ENCODE measurements at regions of chr17 and their contacts with region 1.

Region 1: GRCh38 chr17:1716076-1716995 is 6.2 kb upstream of the TLCD2 start:
- DNase-seq: peak; percentile 100
- H3K4me3 Mint-ChIP-seq: peak overlapping the region; percentile 90
- H3K27ac Mint-ChIP-seq: peak overlapping the region; percentile 92
- H3K4me1 Mint-ChIP-seq: peaks cover 56% of the 10 kb centered on the region
- H3K27me3 Mint-ChIP-seq: peaks cover 40% of the 10 kb centered on the region

Region 2: DNA sequence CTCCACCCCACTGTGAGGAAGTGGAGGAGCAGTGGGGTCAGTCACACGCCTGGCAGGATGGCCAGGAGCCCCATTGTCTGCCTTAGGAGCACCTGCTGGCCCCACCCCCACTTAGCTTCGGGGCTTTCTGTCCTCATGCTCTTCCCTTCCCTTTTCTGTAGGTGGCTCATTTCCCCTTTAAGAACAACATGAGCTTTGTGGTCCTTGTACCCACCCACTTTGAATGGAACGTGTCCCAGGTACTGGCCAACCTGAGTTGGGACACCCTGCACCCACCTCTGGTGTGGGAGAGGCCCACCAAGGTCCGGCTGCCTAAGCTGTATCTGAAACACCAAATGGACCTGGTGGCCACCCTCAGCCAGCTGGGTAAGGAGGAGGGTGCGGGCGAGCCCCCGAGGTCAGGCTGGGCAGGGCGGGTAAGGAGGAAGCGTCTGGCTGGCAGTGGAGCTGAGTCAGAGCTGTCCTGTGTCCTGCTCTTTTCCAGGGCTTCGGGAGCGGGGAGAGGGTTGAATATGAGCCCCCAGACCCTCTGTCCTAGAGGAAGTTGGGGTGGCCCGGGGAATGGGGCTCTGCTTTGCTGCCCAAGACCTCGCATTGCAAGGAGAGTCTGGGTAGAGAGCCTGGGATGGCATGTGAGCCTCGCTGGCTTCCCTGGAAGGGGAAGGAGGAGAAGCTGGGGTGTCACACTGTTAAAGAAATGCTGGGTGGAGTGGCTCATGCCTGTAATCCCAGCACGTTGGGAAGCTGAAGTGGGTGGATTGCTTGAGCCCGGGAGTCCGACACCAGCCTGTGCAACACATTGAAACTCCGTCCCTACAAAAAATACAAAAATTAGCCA is 36.3 kb after region 1 on chr17:
- CTCF ChIA-PET with region 1: no interaction called
- DNase-seq: no peak
- H3K4me3 Mint-ChIP-seq: no peak overlapping the region
- H3K27ac Mint-ChIP-seq: no peak overlapping the region
- H3K4me1 Mint-ChIP-seq: peaks cover 4% of the 10 kb centered on the region
- H3K27me3 Mint-ChIP-seq: peaks cover 63% of the 10 kb centered on the region

Region 3: GRCh38 chr17:1783834-1784611 is 67.7 kb after region 1 on chr17:
- CTCF ChIA-PET with region 1: interaction called, 30 read pairs
- DNase-seq: no peak
- H3K4me3 Mint-ChIP-seq: no peak overlapping the region
- H3K27ac Mint-ChIP-seq: peak overlapping the region; percentile 67
- H3K4me1 Mint-ChIP-seq: peaks cover 14% of the 10 kb centered on the region
- H3K27me3 Mint-ChIP-seq: no peaks in the 10 kb centered on the region

Region 4: GRCh38 chr17:1865252-1866037 is 149.1 kb after region 1 on chr17:
- CTCF ChIA-PET with region 1: interaction called, 23 read pairs
- DNase-seq: peak; percentile 70
- H3K4me3 Mint-ChIP-seq: no peak overlapping the region
- H3K27ac Mint-ChIP-seq: no peak overlapping the region
- H3K4me1 Mint-ChIP-seq: peaks cover 38% of the 10 kb centered on the region
- H3K27me3 Mint-ChIP-seq: no peaks in the 10 kb centered on the region

Region 5: GRCh38 chr17:2025622-2026310 is 309.4 kb after region 1 on chr17:
- CTCF ChIA-PET with region 1: interaction called, 10 read pairs
- DNase-seq: peak; percentile 57
- H3K4me3 Mint-ChIP-seq: peak overlapping the region; percentile 76
- H3K27ac Mint-ChIP-seq: no peak overlapping the region
- H3K4me1 Mint-ChIP-seq: peaks cover 34% of the 10 kb centered on the region
- H3K27me3 Mint-ChIP-seq: peaks cover 94% of the 10 kb centered on the region

Measured in activated naive CD4-positive, alpha-beta T cell treated with anti-CD3 and anti-CD28 coated beads, Interleukin-2, amount 10 ng/mL, durations not matched to agents 7 days and 5 days (primary cell).